SK-N-SH (cell line): ENCODE measurements at regions of chr22 and their contacts with region 1.

Region 1: GRCh38 chr22:35430897-35431322 is 31.0 kb downstream of the MCM5 start:
- DNase-seq: peak; percentile 95
- H3K4me3 ChIP-seq: no peak overlapping the region; a peak in 1 of 4 replicates
- H3K27ac ChIP-seq: peak overlapping the region; percentile 67 to 69
- H3K4me1 ChIP-seq: peaks cover 0 to 9% of the 10 kb centered on the region in 2 experiments; a peak in 1 of 4 replicates
- H3K27me3 ChIP-seq: no peaks in the 10 kb centered on the region
- CTCF ChIP-seq: peak; percentile 98
- EP300 ChIP-seq: peak in 1 of 2 experiments; percentile 35; a peak in 2 of 4 replicates
- RAD21 ChIP-seq: peak; percentile 99

Region 2: GRCh38 chr22:35231585-35232084 is 199.3 kb before region 1 on chr22:
- CTCF ChIA-PET with region 1: no interaction called
- POLR2A ChIA-PET with region 1: no interaction called
- DNase-seq: peak; percentile 60
- H3K4me3 ChIP-seq: peak overlapping the region in 1 of 2 experiments; percentile 36; a peak in 2 of 4 replicates
- H3K27ac ChIP-seq: no peak overlapping the region
- H3K4me1 ChIP-seq: peaks cover 0 to 4% of the 10 kb centered on the region in 2 experiments; a peak in 1 of 4 replicates
- H3K27me3 ChIP-seq: no peaks in the 10 kb centered on the region; the same call in 1 of the 2 replicates
- CTCF ChIP-seq: peak; percentile 95
- EP300 ChIP-seq: no peak
- RAD21 ChIP-seq: peak; percentile 67

Region 3: DNA sequence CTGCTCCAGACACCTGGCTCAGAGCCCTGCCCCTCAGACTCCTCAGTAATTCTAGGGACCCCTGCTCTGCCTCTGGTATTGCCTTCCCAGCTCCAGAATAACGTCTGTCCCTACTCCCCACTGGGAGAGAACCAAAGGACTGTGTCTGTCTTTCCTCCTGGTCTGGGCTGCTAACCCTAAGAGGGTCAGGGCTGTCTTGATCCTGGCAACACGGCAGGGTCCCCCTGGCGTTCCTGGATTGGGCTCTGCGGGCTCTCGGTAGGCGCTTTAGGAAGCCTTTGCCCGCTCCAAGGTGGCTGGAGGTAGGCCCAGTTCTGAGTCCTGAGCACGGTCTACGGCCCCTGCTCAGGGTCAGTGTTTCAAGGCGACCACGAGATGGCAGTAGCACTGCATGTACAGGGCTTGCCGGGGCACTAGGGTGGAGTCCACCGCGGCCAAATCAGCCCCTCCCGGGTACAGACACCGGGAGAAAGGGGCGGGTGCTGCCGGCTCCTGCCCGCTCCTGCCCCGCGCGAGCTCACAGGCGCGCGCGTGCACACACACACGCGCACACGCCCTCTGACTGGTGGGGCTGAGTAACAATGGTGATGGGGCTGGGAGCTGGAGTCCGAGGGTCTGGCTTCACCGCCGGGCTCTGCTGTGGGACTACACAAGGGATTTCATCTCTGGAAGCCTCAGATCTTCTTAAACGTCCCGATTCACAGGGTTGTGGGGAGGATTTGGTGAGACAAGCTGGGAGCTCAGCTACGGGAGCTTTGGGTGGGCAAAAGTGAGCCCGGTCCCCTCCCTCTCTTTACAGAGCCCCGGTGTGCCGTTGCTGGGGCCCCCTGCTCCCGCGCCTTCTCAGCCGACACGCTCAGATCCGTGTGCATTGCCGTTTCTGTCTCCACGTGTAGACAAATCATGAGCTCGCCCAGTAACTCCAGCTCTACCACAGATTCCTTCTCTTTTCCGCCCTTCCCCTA is 80.1 kb before region 1 on chr22:
- CTCF ChIA-PET with region 1: interaction called, 20 read pairs
- POLR2A ChIA-PET with region 1: no interaction called
- DNase-seq: peak; percentile 97
- H3K4me3 ChIP-seq: peak overlapping the region; percentile 52 to 63
- H3K27ac ChIP-seq: peak overlapping the region; percentile 29 to 72; a peak in 3 of 4 replicates
- H3K4me1 ChIP-seq: peaks cover 5 to 24% of the 10 kb centered on the region in 2 experiments; a peak in 2 of 4 replicates
- H3K27me3 ChIP-seq: no peaks in the 10 kb centered on the region
- CTCF ChIP-seq: peak; percentile 73
- EP300 ChIP-seq: no peak
- RAD21 ChIP-seq: peak; percentile 95

Region 4: DNA sequence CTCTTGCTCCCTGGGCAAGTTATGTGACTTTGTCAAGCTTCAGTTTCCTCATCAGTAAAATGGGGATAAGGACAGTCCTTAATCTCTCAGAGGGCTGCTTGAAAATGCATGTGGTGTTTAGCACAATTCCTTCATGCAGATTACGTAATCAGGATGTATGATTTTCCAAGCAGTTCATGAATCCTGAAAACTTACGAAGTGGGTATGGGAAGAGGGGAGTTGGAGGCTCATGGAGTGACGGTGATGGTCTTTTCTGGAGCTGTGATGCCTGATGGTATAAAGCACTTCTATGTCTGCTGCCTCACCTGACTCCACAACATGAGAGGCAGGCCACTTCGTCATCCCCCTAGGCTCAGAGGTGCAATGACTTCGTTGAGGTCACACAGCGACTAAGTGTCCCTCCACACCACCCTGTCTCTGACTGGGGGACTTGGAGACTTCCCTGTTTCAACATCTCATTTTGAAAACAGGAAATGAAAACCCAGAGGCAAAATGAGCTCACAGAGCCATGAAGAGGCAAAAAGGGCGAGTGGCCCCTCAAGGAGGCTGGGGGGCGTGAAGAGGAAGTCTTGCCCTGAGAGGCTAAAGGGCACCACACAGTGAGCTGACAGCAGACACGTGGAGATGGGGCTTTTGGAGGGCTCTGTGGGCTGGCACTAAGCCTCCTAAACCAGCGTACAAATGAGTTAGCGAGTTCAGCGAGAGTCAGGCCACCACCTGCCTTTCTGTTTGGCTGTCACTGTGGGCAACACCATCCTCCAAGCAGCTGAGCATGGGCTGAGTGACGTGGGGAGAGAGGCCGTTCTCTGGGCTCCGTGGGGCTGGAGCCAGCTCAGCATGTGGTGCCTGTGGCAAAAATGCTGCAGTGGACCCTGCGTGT is 20.9 kb before region 1 on chr22:
- CTCF ChIA-PET with region 1: interaction called, 29 read pairs
- POLR2A ChIA-PET with region 1: no interaction called
- DNase-seq: no peak
- H3K4me3 ChIP-seq: no peak overlapping the region
- H3K27ac ChIP-seq: no peak overlapping the region
- H3K4me1 ChIP-seq: no peaks in the 10 kb centered on the region
- H3K27me3 ChIP-seq: no peaks in the 10 kb centered on the region
- CTCF ChIP-seq: no peak
- EP300 ChIP-seq: no peak
- RAD21 ChIP-seq: no peak

Region 5: GRCh38 chr22:35524966-35525686 is 94.2 kb after region 1 on chr22:
- CTCF ChIA-PET with region 1: interaction called, 27 read pairs
- POLR2A ChIA-PET with region 1: no interaction called
- DNase-seq: peak; percentile 88
- H3K4me3 ChIP-seq: no peak overlapping the region
- H3K27ac ChIP-seq: peak overlapping the region in 1 of 2 experiments; percentile 88; a peak in 2 of 4 replicates
- H3K4me1 ChIP-seq: peaks cover 0 to 32% of the 10 kb centered on the region in 2 experiments; a peak in 1 of 4 replicates
- H3K27me3 ChIP-seq: no peaks in the 10 kb centered on the region
- CTCF ChIP-seq: no peak
- EP300 ChIP-seq: peak in 1 of 2 experiments; percentile 95; a peak in 2 of 4 replicates
- RAD21 ChIP-seq: peak; percentile 37

Region 6: DNA sequence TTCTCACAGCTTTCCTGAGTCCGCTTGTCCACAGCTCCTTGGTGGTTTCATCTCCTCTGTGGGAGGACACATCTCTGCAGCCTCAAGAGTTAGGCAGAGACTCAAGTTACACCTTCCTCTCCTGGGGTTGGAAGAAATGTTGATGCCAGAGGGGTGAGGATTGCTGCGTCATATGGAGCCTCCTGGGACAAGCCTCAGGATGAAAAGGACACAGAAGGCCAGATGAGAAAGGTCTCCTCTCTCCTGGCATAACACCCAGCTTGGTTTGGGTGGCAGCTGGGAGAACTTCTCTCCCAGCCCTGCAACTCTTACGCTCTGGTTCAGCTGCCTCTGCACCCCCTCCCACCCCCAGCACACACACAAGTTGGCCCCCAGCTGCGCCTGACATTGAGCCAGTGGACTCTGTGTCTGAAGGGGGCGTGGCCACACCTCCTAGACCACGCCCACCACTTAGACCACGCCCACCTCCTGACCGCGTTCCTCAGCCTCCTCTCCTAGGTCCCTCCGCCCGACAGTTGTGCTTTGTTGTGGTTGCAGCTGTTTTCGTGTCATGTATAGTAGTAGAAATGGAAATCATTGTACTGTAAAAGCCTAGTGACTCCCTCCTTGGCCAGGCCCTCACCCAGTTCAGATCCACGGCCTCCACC is 121.4 kb after region 1 on chr22:
- CTCF ChIA-PET with region 1: interaction called, 16 read pairs
- POLR2A ChIA-PET with region 1: no interaction called
- DNase-seq: peak; percentile 87
- H3K4me3 ChIP-seq: no peak overlapping the region
- H3K27ac ChIP-seq: no peak overlapping the region
- H3K4me1 ChIP-seq: peaks cover 0 to 8% of the 10 kb centered on the region in 2 experiments; a peak in 2 of 4 replicates
- H3K27me3 ChIP-seq: no peaks in the 10 kb centered on the region
- CTCF ChIP-seq: no peak
- EP300 ChIP-seq: no peak
- RAD21 ChIP-seq: no peak

Region 7: DNA sequence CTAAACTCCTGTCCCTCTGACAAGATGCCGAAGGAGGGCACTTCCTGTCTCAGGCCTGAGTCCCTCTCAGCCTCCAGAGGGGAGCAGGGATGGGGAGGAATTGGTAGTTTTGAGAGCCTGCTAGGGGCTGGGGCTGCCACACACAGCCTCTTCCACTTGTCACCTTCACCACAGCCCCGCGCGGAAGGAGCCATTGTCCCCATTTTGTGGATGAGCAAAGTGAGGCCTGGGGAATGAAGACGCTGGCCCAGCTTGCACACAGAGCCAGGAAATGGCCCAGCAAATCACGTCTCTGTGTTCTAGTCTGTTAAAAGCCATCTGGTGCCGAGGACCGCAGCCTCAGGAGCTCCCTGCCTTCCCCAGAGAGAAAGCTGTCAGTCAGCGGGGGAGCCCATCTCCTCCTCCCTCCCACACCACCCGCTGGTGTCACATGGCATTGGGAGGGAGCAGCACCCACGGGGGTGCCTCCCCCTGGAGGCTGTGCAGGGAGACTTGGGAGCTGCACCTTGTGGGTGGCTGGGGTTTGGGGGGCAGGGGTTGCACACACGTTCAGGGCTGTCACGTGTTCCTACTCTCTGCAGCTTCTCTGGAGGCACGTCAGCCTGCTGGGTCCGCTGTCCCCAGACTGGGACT is 144.3 kb after region 1 on chr22:
- CTCF ChIA-PET with region 1: interaction called, 161 read pairs
- POLR2A ChIA-PET with region 1: no interaction called
- DNase-seq: peak; percentile 57
- H3K4me3 ChIP-seq: no peak overlapping the region
- H3K27ac ChIP-seq: no peak overlapping the region
- H3K4me1 ChIP-seq: no peaks in the 10 kb centered on the region
- H3K27me3 ChIP-seq: no peaks in the 10 kb centered on the region
- CTCF ChIP-seq: no peak
- EP300 ChIP-seq: no peak
- RAD21 ChIP-seq: no peak

Region 8: DNA sequence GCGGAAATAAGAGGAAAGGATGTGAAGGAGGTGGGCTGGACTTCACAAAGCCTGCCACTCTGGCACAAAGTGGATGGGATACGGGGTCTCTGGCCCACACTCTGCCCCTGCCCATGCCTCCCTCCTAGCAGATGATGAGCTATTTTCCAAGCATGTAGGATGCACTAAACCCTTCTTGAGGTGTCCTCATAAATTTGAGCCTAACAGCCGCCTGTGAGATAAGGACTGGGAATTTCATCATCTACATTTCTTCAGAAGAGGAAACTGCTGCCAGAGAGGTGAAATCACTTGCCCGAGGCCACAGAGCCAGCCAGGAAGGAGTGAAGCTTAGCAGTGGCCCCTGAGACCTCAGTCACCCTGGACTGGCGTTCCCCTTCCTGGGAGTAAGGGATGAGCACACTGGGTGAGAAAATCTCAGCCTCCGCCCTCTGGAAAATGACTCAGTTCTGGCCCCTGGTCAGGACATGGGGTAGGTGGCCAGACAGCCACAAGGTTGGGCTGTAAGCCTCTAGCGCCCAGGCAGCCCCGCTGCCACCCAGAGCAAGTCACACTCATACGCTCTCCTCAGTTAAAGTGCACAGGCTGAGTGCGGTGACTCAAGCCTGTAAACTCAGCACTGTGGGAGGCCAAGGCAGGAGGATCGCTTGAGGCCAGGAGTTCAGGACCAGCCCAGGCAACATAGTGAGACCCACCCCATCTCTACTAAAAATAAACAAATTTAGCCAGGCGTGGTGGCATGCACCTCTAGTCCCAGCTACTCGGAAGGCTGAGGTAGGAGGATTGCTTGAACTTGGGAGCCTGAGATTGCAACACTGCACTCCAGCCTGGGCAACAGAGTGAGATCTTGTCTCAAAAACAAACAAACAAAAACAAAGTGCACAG is 158.4 kb after region 1 on chr22:
- CTCF ChIA-PET with region 1: interaction called, 161 read pairs
- POLR2A ChIA-PET with region 1: no interaction called
- DNase-seq: no peak
- H3K4me3 ChIP-seq: no peak overlapping the region
- H3K27ac ChIP-seq: peak overlapping the region in 1 of 2 experiments; percentile 52; a peak in 2 of 4 replicates
- H3K4me1 ChIP-seq: peaks cover 4 to 46% of the 10 kb centered on the region in 2 experiments; a peak in 2 of 4 replicates
- H3K27me3 ChIP-seq: no peaks in the 10 kb centered on the region
- CTCF ChIP-seq: no peak
- EP300 ChIP-seq: peak in 1 of 2 experiments; percentile 23; a peak in 1 of 4 replicates
- RAD21 ChIP-seq: no peak